Right ventricle myocardium superior (tissue), 1 donor: ENCODE measurements at regions of chr12 and their contacts with region 1.

Region 1: GRCh38 chr12:19757317-19757877 is 318.1 kb downstream of the AEBP2 start:
- DNase-seq: no peak
- ATAC-seq: peak; percentile 74

Region 2: DNA sequence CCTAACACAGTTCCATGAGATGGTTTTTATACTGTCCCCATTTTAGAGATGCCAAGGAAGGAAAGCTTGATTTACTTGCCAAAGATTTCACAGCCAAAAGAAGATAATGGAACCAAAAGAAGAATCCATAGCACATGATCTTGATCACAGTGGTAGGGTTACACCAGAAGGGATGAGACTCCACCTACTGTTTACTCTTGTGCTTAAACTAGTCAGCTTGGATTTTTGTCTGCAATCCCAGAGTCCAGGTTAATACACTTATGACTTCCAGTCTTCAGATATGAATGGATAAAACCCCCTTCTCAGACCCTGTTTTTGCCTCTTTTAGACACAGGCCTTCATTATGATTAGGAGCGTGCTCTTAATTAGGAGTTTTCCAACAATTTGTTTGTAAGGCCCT is 136.1 kb after region 1 on chr12:
- intact Hi-C with region 1: loop called (anchors 10 kb)
- DNase-seq: no peak
- ATAC-seq: peak; percentile 72